ENCODE measurements at regions of chr5 and their contacts with region 1.

Region 1: GRCh38 chr5:163564321-163564938 is 59.0 kb downstream of the MAT2B start:
- DNase-seq: peak; percentile 30
- ATAC-seq: peak; percentile 50
- H3K4me3 ChIP-seq: no peak overlapping the region
- H3K27ac ChIP-seq: no peak overlapping the region
- H3K4me1 ChIP-seq: no peaks in the 10 kb centered on the region
- H3K27me3 ChIP-seq: peaks cover 0 to 8% of the 10 kb centered on the region in 2 experiments; a peak in 3 of 4 replicates
- CTCF ChIP-seq: peak; percentile 83 to 92 (median 84)
- EP300 ChIP-seq: no peak
- POLR2A ChIP-seq: no peak
- RAD21 ChIP-seq: peak; percentile 93

Region 2: DNA sequence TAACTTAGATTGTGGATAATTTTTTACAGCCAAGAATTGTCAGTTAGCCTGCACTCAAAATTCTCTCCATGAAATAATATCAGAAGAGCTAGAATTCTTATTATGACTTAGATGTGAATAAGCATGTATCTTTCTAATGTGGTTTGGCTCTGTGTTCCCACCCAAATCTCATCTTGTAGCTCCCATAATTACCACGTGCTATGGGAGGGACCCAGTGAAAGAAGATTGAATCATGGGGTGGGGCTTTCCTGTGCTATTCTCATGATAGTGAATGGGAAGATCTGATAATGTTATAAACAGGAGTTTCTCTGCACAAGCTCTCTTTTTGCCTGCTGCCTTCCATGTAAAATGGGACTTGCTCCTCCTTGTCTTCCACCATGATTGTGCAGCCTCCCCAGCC is 117.8 kb after region 1 on chr5:
- CTCF ChIA-PET with region 1: no interaction called
- POLR2A ChIA-PET with region 1: no interaction called
- RAD21 ChIA-PET with region 1: no interaction called
- SMC1A ChIA-PET with region 1: no interaction called
- in situ Hi-C with region 1: no loop called
- intact Hi-C with region 1: no loop called
- DNase-seq: no peak
- ATAC-seq: no peak
- H3K4me3 ChIP-seq: no peak overlapping the region
- H3K27ac ChIP-seq: no peak overlapping the region
- H3K4me1 ChIP-seq: no peaks in the 10 kb centered on the region
- H3K27me3 ChIP-seq: no peaks in the 10 kb centered on the region
- CTCF ChIP-seq: no peak
- EP300 ChIP-seq: no peak
- POLR2A ChIP-seq: no peak
- RAD21 ChIP-seq: no peak

Region 3: DNA sequence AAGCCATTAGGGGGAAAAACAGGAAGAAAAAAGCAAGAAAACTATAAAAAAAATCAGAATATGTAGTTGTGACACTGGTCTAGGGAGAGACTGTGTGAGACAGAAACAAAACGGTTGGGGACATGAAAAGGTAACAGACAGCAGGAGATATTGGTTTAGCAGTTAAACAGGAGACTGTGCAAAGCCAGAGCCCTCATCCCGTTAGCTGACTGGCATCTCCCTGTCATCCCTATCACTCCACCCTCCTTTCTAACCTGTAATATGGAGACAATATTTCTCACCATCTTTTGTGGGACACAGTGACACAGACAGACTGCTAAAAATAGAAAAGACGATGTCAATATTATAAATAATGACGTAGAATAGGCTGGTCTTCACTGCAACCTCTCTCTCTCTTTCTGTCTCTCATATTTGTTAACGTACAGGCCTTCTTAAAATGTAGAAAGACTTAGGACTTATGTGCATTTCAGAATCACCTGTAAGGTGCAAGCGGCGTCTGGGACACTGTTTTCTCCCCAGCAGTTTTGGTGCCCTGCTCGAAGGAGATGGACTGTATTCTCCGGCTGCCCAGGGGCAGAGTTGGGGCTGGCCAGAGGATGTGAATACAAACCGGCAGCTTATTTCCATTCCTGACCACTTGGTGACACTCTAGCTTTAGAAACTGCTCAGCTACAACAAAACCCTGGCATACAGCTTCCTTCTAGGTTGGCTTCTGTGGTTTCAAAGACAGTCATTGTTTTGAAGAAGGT is 131.6 kb after region 1 on chr5:
- CTCF ChIA-PET with region 1: interaction called, 6 read pairs
- POLR2A ChIA-PET with region 1: no interaction called
- RAD21 ChIA-PET with region 1: interaction called, 5 read pairs
- SMC1A ChIA-PET with region 1: interaction called, 4 read pairs
- in situ Hi-C with region 1: no loop called
- intact Hi-C with region 1: loop called (anchors 5 kb)
- DNase-seq: peak; percentile 8
- ATAC-seq: peak; percentile 99
- H3K4me3 ChIP-seq: no peak overlapping the region
- H3K27ac ChIP-seq: no peak overlapping the region
- H3K4me1 ChIP-seq: no peaks in the 10 kb centered on the region
- H3K27me3 ChIP-seq: no peaks in the 10 kb centered on the region
- CTCF ChIP-seq: peak; percentile 55 to 77 (median 58); a peak in 5 of 6 replicates
- EP300 ChIP-seq: no peak
- POLR2A ChIP-seq: no peak
- RAD21 ChIP-seq: peak; percentile 86

Region 4: DNA sequence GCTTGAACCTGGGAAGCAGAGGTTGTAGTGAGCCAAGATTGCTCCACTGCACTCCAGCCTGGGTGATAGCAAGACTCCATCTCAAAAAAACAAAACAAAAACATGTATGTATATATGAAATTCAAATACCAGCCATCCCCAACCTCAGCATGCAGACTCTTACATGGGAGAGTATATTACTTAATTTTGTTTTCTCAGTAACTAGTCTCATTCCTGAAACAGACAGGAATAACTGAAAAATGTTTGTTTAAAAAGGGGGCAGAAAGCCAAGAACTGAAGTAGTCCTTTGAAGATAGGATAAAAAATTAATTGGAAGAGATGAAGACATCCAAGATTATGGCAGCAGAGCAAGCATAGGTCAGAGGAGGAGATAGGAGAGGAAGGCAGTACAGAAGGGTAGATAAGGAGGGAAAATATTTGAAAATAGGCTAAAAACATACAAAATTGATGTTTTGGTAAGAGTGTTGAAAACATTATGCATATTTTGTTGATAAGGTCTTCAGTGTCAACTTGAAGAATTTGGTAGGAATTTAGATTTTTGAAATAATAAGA is 250.9 kb after region 1 on chr5:
- CTCF ChIA-PET with region 1: no interaction called
- POLR2A ChIA-PET with region 1: no interaction called
- RAD21 ChIA-PET with region 1: no interaction called
- SMC1A ChIA-PET with region 1: no interaction called
- in situ Hi-C with region 1: no loop called
- intact Hi-C with region 1: loop called (anchors 10 kb)
- DNase-seq: no peak
- ATAC-seq: no peak
- H3K4me3 ChIP-seq: no peak overlapping the region
- H3K27ac ChIP-seq: no peak overlapping the region
- H3K4me1 ChIP-seq: no peaks in the 10 kb centered on the region
- H3K27me3 ChIP-seq: no peaks in the 10 kb centered on the region
- CTCF ChIP-seq: no peak
- EP300 ChIP-seq: no peak
- POLR2A ChIP-seq: no peak
- RAD21 ChIP-seq: no peak

Region 5: DNA sequence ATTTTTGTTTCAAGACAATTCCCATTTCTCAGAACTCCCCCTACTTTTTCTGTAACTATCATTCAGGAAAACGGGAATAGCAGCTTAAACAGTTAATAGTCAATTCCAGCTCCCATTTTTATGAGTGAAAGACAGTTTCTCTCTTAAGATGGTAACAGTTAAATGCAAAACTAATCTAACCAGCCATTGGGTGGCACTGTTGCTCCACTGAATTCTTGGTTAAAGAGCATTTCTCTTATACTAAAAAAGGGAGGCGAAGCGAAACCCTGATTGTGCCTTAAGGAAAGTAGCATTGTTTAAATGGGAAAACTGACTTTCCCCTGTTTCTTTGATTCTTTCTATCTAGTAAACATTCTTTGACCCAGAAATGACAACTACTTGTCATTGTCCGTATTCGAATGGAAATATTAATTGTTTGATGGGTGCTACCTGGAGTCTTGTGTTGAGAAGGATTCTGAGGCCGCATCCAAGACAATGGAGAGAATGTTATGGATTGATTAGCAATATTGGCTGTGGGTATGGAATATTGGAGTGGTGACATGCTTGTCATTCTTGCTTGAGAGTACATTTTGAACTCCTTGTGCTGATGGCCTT is 448.7 kb after region 1 on chr5:
- CTCF ChIA-PET with region 1: interaction called, 5 read pairs
- POLR2A ChIA-PET with region 1: no interaction called
- RAD21 ChIA-PET with region 1: interaction called, 4 read pairs
- SMC1A ChIA-PET with region 1: interaction called, 11 read pairs
- in situ Hi-C with region 1: no loop called
- intact Hi-C with region 1: loop called (anchors 2 kb)
- DNase-seq: peak; percentile 19
- ATAC-seq: peak; percentile 85
- H3K4me3 ChIP-seq: no peak overlapping the region
- H3K27ac ChIP-seq: no peak overlapping the region
- H3K4me1 ChIP-seq: no peaks in the 10 kb centered on the region
- H3K27me3 ChIP-seq: no peaks in the 10 kb centered on the region
- CTCF ChIP-seq: peak; percentile 51 to 83 (median 60); a peak in 5 of 6 replicates
- EP300 ChIP-seq: no peak
- POLR2A ChIP-seq: no peak
- RAD21 ChIP-seq: peak; percentile 93

Region 6: GRCh38 chr5:164475339-164475977 is 911.0 kb after region 1 on chr5:
- CTCF ChIA-PET with region 1: no interaction called
- POLR2A ChIA-PET with region 1: no interaction called
- RAD21 ChIA-PET with region 1: interaction called, 5 read pairs
- SMC1A ChIA-PET with region 1: interaction called, 3 read pairs
- in situ Hi-C with region 1: no loop called
- intact Hi-C with region 1: loop called (anchors 10 kb)
- DNase-seq: no peak
- ATAC-seq: peak; percentile 54; the same call in 1 of the 3 replicates
- H3K4me3 ChIP-seq: no peak overlapping the region
- H3K27ac ChIP-seq: no peak overlapping the region
- H3K4me1 ChIP-seq: no peaks in the 10 kb centered on the region
- H3K27me3 ChIP-seq: no peaks in the 10 kb centered on the region
- CTCF ChIP-seq: peak; percentile 14 to 43 (median 20); a peak in 3 of 6 replicates
- EP300 ChIP-seq: no peak
- POLR2A ChIP-seq: no peak
- RAD21 ChIP-seq: peak; percentile 60

Region 7: DNA sequence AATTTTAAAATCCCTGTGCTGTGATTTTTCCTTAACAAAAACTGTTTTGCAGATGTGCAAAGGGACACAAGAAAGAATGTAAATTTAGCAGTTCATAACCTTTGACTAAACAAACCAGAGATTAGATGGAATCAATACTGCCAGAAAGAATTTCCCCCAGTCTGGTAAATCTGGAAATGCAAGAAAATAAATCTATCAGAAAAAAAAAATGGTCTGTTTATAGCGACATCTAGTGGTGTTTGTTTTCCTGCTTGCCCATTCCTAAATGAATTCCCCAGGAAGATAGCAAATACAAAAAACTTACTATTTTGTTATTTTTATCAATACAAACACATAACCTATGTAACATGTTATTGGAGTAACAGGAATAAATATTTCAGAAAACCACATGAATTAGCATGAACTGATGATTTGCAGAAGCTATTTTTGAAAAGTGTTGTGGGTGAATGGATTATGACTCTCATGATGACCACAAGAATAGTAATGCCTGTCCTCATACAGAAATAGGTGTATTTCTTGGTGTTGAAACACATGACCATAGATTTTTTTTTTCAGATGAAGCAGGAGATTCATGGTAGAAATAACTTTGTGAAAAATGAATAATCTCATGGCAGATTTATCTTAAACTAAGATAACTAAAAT is 1644.8 kb after region 1 on chr5:
- CTCF ChIA-PET with region 1: interaction called, 4 read pairs
- POLR2A ChIA-PET with region 1: no interaction called
- RAD21 ChIA-PET with region 1: interaction called, 3 read pairs
- SMC1A ChIA-PET with region 1: no interaction called
- in situ Hi-C with region 1: loop called (anchors 10 kb)
- intact Hi-C with region 1: loop called (anchors 2 kb)
- DNase-seq: no peak
- ATAC-seq: no peak
- H3K4me3 ChIP-seq: no peak overlapping the region
- H3K27ac ChIP-seq: no peak overlapping the region
- H3K4me1 ChIP-seq: no peaks in the 10 kb centered on the region
- H3K27me3 ChIP-seq: no peaks in the 10 kb centered on the region
- CTCF ChIP-seq: peak; percentile 50 to 53 (median 53); a peak in 5 of 6 replicates
- EP300 ChIP-seq: no peak
- POLR2A ChIP-seq: no peak
- RAD21 ChIP-seq: peak; percentile 60

Region 8: DNA sequence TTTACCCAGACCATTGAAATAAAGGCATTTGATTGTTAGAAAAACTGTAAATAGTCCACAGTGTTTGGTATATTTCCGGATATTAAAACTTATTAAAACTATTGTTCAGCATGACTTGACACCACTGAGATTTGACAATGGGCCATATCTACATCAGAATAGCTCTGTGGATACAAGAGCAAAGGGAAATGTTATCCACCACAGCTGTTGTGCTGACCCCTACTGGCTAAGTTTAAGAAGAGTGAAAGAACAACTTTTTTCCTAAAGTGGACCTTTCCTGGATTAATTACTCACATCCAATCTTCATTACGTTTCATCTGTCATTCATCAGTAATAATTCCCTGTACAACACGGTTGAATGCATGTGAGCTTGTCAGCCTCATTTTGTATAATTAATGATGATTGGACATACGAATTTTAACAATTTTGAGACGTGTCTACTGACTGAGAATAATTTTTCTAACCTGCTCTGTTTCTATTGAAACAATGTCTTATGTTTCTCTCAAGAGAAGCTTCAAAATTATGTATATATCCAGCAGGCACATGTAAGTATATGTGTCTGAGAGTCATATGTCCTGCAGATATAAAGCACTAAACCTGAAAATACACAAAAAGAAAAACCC is 1893.5 kb after region 1 on chr5:
- CTCF ChIA-PET with region 1: interaction called, 4 read pairs
- POLR2A ChIA-PET with region 1: no interaction called
- RAD21 ChIA-PET with region 1: no interaction called
- SMC1A ChIA-PET with region 1: no interaction called
- in situ Hi-C with region 1: no loop called
- intact Hi-C with region 1: loop called (anchors 10 kb)
- DNase-seq: no peak
- ATAC-seq: peak; percentile 66
- H3K4me3 ChIP-seq: no peak overlapping the region
- H3K27ac ChIP-seq: no peak overlapping the region
- H3K4me1 ChIP-seq: no peaks in the 10 kb centered on the region
- H3K27me3 ChIP-seq: no peaks in the 10 kb centered on the region
- CTCF ChIP-seq: peak; percentile 39 to 49 (median 44); a peak in 5 of 6 replicates
- EP300 ChIP-seq: no peak
- POLR2A ChIP-seq: no peak
- RAD21 ChIP-seq: peak; percentile 23; the same call in 1 of the 2 replicates